IMR-90 (cell line): ENCODE measurements at regions of chr9 and their contacts with region 1.

Region 1: DNA sequence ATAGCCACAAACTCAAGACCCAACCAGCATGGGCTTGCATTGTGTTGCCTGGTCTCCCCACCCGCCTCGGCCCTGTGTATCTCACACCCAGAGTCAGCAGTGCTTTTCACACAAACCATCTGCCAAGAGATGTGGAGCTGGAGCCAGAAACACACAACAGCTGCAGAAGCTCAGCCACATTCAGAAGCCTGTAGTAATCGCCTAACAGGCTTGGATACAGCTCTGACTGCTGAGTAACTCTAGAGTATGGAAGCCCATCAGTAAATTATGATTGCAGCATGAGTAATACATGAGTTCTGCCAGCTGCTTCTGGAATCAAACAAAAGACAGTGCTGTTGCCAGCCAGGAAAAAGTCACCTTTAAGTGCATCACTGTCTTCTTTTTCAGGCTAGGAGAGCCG is 16.0 kb downstream of the TEK start:
- DNase-seq: peak; percentile 99
- ATAC-seq: peak; percentile 83
- H3K4me3 ChIP-seq: no peak overlapping the region
- H3K27ac ChIP-seq: peak overlapping the region; percentile 96
- H3K4me1 ChIP-seq: peaks cover 19% of the 10 kb centered on the region
- H3K27me3 ChIP-seq: no peaks in the 10 kb centered on the region
- CTCF ChIP-seq: no peak
- POLR2A ChIP-seq: no peak
- RAD21 ChIP-seq: peak; percentile 19; the same call in 1 of the 2 replicates

Region 2: DNA sequence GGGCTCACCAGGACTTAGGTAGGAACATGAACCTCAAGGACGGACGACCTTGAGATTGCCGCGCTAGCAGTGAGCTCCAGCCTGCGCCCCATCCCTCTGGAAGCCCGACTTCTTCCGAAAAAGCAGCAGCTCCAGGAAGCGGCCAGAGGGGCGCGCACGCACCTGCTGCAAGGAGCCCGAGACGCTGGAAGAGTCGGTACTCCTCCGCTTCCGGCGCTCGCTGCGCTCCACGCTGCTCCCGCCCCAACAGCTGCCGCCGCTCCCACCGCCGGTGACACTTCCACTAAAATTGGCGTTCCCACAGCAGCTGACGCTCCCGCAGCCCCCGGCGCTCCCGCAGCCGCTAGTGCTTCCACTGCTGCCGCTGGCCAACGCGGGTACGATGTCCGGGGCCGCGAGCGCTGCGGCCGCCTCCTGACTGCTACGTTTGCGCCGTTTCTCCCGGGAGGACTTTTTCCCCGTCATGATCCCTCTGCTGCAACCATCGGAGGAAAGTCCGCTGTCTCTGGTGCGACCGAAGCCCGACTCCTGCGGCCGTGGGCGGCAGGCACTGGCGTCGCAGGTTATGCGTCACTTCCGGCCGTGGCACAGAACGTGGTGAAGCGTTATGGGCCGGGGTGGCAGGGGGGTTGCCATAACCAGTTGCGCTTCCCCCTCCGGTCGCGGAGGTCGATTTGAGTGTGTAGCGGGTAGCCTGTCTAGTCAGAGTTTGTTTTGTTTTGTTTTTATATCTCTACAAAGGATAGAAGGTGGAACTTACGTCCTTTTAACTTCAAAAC is 232.6 kb before region 1 on chr9 and contains the start of gene CAAP1:
- CTCF ChIA-PET with region 1: no interaction called
- POLR2A ChIA-PET with region 1: no interaction called
- dilution Hi-C with region 1: no loop called
- in situ Hi-C with region 1: no loop called
- intact Hi-C with region 1: loop called (anchors 10 kb)
- DNase-seq: peak; percentile 92
- ATAC-seq: peak; percentile 96
- H3K4me3 ChIP-seq: peak within 1 kb of the TSS; percentile 84
- H3K27ac ChIP-seq: peak within 1 kb of the TSS; percentile 81
- H3K4me1 ChIP-seq: no peaks in the 10 kb centered on the region
- H3K27me3 ChIP-seq: no peaks in the 10 kb centered on the region
- CTCF ChIP-seq: peak; percentile 49
- POLR2A ChIP-seq: peak; percentile 92
- RAD21 ChIP-seq: peak; percentile 49
- total RNA-seq, gene CAAP1: 6.1 and 12.2 TPM in 2 replicates

Region 3: GRCh38 chr9:26955921-26956859 is 168.8 kb before region 1 on chr9 and contains the start of gene IFT74:
- CTCF ChIA-PET with region 1: no interaction called
- POLR2A ChIA-PET with region 1: no interaction called
- dilution Hi-C with region 1: no loop called
- in situ Hi-C with region 1: no loop called
- intact Hi-C with region 1: loop called (anchors 5 kb)
- DNase-seq: peak; percentile 98
- ATAC-seq: peak; percentile 100
- H3K4me3 ChIP-seq: peak within 1 kb of the TSS; percentile 67
- H3K27ac ChIP-seq: peak within 1 kb of the TSS; percentile 92
- H3K4me1 ChIP-seq: no peaks in the 10 kb centered on the region
- H3K27me3 ChIP-seq: no peaks in the 10 kb centered on the region
- CTCF ChIP-seq: no peak
- POLR2A ChIP-seq: peak; percentile 82
- RAD21 ChIP-seq: no peak
- total RNA-seq, gene IFT74: 11.9 and 12.2 TPM in 2 replicates

Region 4: DNA sequence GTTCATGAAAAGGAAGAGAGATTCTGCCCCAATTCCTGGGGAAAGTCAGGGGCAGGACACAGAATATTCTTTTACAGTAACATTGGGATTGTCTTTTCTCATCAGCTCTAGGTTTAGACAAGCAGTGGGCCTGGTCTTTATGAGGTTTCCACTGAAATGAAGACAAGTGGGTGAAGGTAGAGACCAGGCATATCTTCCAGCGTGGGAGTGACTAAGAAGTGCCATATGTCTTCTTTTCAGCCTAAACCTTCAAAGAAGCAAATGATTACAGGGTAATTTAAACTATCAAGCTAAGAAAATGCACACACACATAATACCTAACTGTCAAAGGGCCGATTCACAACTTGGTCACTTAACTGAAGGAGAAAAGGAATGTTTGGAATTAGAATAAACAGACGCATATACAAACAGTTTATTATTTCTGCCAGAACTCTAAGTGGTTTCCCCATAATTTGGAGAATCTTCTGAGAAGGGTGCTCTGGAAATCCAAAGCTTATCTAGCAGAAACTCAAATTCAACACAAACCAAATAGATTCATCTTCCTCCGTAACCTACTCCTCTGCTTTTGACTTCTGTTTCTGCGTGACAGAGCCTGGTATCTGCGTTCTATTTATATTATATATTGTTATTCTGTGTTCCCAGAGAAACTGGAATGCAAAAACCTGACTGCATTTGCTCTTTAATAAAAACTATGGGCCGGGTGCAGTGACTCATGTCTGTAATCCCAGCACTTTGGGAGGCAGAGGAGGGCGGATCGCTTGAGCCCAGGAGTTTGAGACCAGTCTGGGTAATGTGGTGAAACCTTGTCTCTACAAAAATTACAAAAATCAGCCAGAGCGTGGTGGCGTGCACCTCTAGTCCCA is 38.0 kb before region 1 on chr9:
- CTCF ChIA-PET with region 1: no interaction called
- POLR2A ChIA-PET with region 1: interaction called, 9 read pairs
- dilution Hi-C with region 1: no loop called
- in situ Hi-C with region 1: no loop called
- intact Hi-C with region 1: loop called (anchors 2 kb)
- DNase-seq: peak; percentile 90
- ATAC-seq: peak; percentile 78
- H3K4me3 ChIP-seq: peak overlapping the region; percentile 8; the same call in 1 of the 2 replicates
- H3K27ac ChIP-seq: peak overlapping the region; percentile 97
- H3K4me1 ChIP-seq: peaks cover 20% of the 10 kb centered on the region
- H3K27me3 ChIP-seq: no peaks in the 10 kb centered on the region
- CTCF ChIP-seq: no peak
- POLR2A ChIP-seq: peak; percentile 72; the same call in 1 of the 2 replicates
- RAD21 ChIP-seq: no peak; the same call in 1 of the 2 replicates

Region 5: GRCh38 chr9:27154908-27155307 is 29.9 kb after region 1 on chr9:
- CTCF ChIA-PET with region 1: no interaction called
- POLR2A ChIA-PET with region 1: interaction called, 3 read pairs
- dilution Hi-C with region 1: no loop called
- in situ Hi-C with region 1: no loop called
- intact Hi-C with region 1: loop called (anchors 2 kb)
- DNase-seq: peak; percentile 95
- ATAC-seq: peak; percentile 84
- H3K4me3 ChIP-seq: no peak overlapping the region
- H3K27ac ChIP-seq: peak overlapping the region; percentile 63
- H3K4me1 ChIP-seq: peaks cover 18% of the 10 kb centered on the region
- H3K27me3 ChIP-seq: no peaks in the 10 kb centered on the region
- CTCF ChIP-seq: no peak
- POLR2A ChIP-seq: no peak
- RAD21 ChIP-seq: no peak

Region 6: DNA sequence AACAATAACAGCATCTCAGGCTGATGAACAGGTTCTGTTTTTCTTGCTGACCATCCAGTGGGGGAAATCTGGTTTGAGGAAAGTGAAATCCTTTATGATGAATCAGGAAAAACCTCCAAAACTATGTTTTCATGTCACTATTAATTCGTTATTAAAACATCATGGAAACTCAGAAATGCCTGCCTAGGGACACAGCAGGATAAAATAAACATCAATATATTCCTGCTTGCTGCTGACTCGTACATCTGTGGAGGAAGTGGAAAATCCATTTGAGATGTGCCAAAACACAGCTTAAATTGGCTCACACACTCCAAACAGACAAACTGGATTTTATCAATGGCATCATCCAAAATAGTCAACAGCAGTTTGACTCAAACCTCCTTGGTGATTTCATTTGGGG is 37.0 kb after region 1 on chr9:
- CTCF ChIA-PET with region 1: interaction called, 4 read pairs
- POLR2A ChIA-PET with region 1: no interaction called
- dilution Hi-C with region 1: no loop called
- in situ Hi-C with region 1: no loop called
- intact Hi-C with region 1: loop called (anchors 5 kb)
- DNase-seq: peak; percentile 79
- ATAC-seq: peak; percentile 65
- H3K4me3 ChIP-seq: no peak overlapping the region
- H3K27ac ChIP-seq: peak overlapping the region; percentile 7; the same call in 1 of the 2 replicates
- H3K4me1 ChIP-seq: peaks cover 15% of the 10 kb centered on the region
- H3K27me3 ChIP-seq: no peaks in the 10 kb centered on the region
- CTCF ChIP-seq: no peak
- POLR2A ChIP-seq: no peak
- RAD21 ChIP-seq: no peak

Region 7: GRCh38 chr9:27184556-27185351 is 59.7 kb after region 1 on chr9:
- CTCF ChIA-PET with region 1: no interaction called
- POLR2A ChIA-PET with region 1: interaction called, 3 read pairs
- dilution Hi-C with region 1: no loop called
- in situ Hi-C with region 1: no loop called
- intact Hi-C with region 1: loop called (anchors 5 kb)
- DNase-seq: no peak
- ATAC-seq: no peak
- H3K4me3 ChIP-seq: no peak overlapping the region
- H3K27ac ChIP-seq: no peak overlapping the region
- H3K4me1 ChIP-seq: peaks cover 19% of the 10 kb centered on the region
- H3K27me3 ChIP-seq: no peaks in the 10 kb centered on the region
- CTCF ChIP-seq: no peak
- POLR2A ChIP-seq: no peak
- RAD21 ChIP-seq: no peak

Region 8: GRCh38 chr9:27258662-27259061 is 133.6 kb after region 1 on chr9:
- CTCF ChIA-PET with region 1: no interaction called
- POLR2A ChIA-PET with region 1: no interaction called
- dilution Hi-C with region 1: no loop called
- in situ Hi-C with region 1: no loop called
- intact Hi-C with region 1: no loop called
- DNase-seq: no peak
- ATAC-seq: no peak
- H3K4me3 ChIP-seq: no peak overlapping the region
- H3K27ac ChIP-seq: no peak overlapping the region
- H3K4me1 ChIP-seq: no peaks in the 10 kb centered on the region
- H3K27me3 ChIP-seq: peaks cover 11% of the 10 kb centered on the region
- CTCF ChIP-seq: no peak
- POLR2A ChIP-seq: no peak
- RAD21 ChIP-seq: no peak